Tibial artery (tissue), 4 donors: ENCODE measurements at regions of chr12 and their contacts with region 1.

Region 1: GRCh38 chr12:46915082-46915481 is 89.3 kb upstream of the SLC38A4 start:
- DNase-seq: peak in 1 of 2 donors; percentile 26
- H3K4me3 ChIP-seq: no peak overlapping the region
- H3K27ac ChIP-seq: no peak overlapping the region
- H3K4me1 ChIP-seq: peaks cover 0 to 27% (median 0%) of the 10 kb centered on the region in 4 donors
- H3K27me3 ChIP-seq: no peaks in the 10 kb centered on the region
- CTCF ChIP-seq: no peak

Region 2: GRCh38 chr12:46617167-46617566 is 297.9 kb before region 1 on chr12:
- intact Hi-C with region 1: no loop called
- DNase-seq: peak; percentile 76 to 83
- H3K4me3 ChIP-seq: no peak overlapping the region
- H3K27ac ChIP-seq: peak overlapping the region; percentile 46 to 57
- H3K4me1 ChIP-seq: peaks cover 0 to 20% (median 11%) of the 10 kb centered on the region in 4 donors
- H3K27me3 ChIP-seq: no peaks in the 10 kb centered on the region
- CTCF ChIP-seq: no peak

Region 3: DNA sequence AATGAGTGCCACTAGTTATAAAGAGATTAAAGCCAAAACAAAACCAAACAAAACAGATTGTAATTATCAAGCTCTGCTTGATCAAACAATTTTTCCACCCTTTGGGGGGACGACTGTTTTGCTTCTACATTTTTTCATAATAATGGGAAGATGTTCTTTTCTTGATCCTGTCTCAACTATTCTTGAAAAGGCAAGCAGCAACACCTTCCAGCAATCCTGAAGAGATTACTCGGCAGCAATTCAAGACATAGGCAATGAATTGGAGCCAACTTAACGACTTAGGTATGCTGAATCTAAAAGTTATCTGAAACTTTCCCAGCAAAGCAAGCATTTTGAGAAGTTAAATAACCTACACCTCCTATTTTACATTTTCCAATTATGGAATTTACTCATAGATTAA is 19.4 kb before region 1 on chr12:
- intact Hi-C with region 1: loop called (anchors 1 kb)
- DNase-seq: no peak
- H3K4me3 ChIP-seq: no peak overlapping the region
- H3K27ac ChIP-seq: no peak overlapping the region
- H3K4me1 ChIP-seq: peaks cover 4 to 20% (median 5%) of the 10 kb centered on the region in 4 donors
- H3K27me3 ChIP-seq: no peaks in the 10 kb centered on the region
- CTCF ChIP-seq: no peak